ENCODE measurements at regions of chr12 and their contacts with region 1.

Region 1: GRCh38 chr12:99984271-99985128 is at the start of gene ANKS1B:
- DNase-seq: peak; percentile 9 to 37
- ATAC-seq: peak; percentile 69 to 71
- H3K4me3 ChIP-seq: peak within 1 kb of the TSS; percentile 64 to 74 (median 68)
- H3K27ac ChIP-seq: peak within 1 kb of the TSS; percentile 72 to 77 (median 74)
- H3K4me1 ChIP-seq: peaks cover 0 to 11% of the 10 kb centered on the region in 2 donors
- H3K27me3 ChIP-seq: no peaks in the 10 kb centered on the region
- CTCF ChIP-seq: no peak
- POLR2A ChIP-seq: no peak
- total RNA-seq, gene ANKS1B: 3.9 to 14.5 (median 5.7) TPM

Region 2: GRCh38 chr12:99810718-99811593 is 173.5 kb before region 1 on chr12:
- in situ Hi-C with region 1: loop called in 1 of 4 experiments (anchors 25 kb)
- intact Hi-C with region 1: loop called (anchors 5 kb)
- DNase-seq: no peak
- ATAC-seq: no peak
- H3K4me3 ChIP-seq: no peak overlapping the region
- H3K27ac ChIP-seq: no peak overlapping the region
- H3K4me1 ChIP-seq: no peaks in the 10 kb centered on the region
- H3K27me3 ChIP-seq: no peaks in the 10 kb centered on the region
- CTCF ChIP-seq: peak in 2 of 5 experiments; percentile 23 to 38
- POLR2A ChIP-seq: no peak

Region 3: DNA sequence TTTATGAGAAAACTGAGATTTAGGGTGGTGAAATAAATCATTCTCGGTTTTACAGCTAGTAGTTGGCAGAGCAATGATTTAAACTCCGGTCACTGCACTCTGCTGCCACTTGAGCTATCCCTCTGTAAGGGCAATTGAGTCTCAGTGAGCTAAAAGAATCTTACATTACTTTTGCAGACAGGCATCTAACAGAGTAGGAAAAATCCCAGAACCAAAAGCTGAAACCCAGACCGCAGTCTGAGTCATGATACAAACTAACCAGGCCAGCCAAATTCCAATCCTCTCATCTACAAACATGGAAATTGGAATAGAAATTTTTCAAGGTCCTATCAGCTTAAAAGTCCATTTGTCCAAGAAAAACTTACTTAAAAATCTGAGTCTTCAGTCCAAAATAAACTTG is 73.4 kb before region 1 on chr12:
- in situ Hi-C with region 1: no loop called
- intact Hi-C with region 1: loop called (anchors 2 kb)
- DNase-seq: peak; percentile 20 to 61
- ATAC-seq: peak; percentile 94
- H3K4me3 ChIP-seq: peak overlapping the region; percentile 10 to 27 (median 22)
- H3K27ac ChIP-seq: peak overlapping the region; percentile 65 to 79 (median 74)
- H3K4me1 ChIP-seq: peaks cover 0 to 18% of the 10 kb centered on the region in 2 donors
- H3K27me3 ChIP-seq: no peaks in the 10 kb centered on the region
- CTCF ChIP-seq: peak in 1 of 5 experiments; percentile 15
- POLR2A ChIP-seq: no peak

Region 4: GRCh38 chr12:99959547-99960180 is 24.8 kb before region 1 on chr12:
- in situ Hi-C with region 1: no loop called
- intact Hi-C with region 1: loop called (anchors 2 kb)
- DNase-seq: no peak
- ATAC-seq: peak; percentile 28 to 68
- H3K4me3 ChIP-seq: peak overlapping the region in 1 of 4 donors; percentile 32
- H3K27ac ChIP-seq: peak overlapping the region in 3 of 4 donors; percentile 36 to 66 (median 56)
- H3K4me1 ChIP-seq: peaks cover 15 to 27% of the 10 kb centered on the region in 2 donors
- H3K27me3 ChIP-seq: no peaks in the 10 kb centered on the region
- CTCF ChIP-seq: no peak
- POLR2A ChIP-seq: no peak

Measured in gastrocnemius medialis (tissue), 4 donors.